CD4-positive, alpha-beta memory T cell (primary cell): ENCODE measurements at regions of chr19 and their contacts with region 1.

Region 1: GRCh38 chr19:44002566-44003460 is at the start of gene ZNF230:
- DNase-seq: peak; percentile 80 to 89 (median 83)
- H3K4me3 ChIP-seq: peak within 1 kb of the TSS; percentile 66 to 75
- H3K4me3 Mint-ChIP-seq: peak within 1 kb of the TSS; percentile 98 to 100 (median 99)
- H3K27ac ChIP-seq: peak within 1 kb of the TSS; percentile 58
- H3K27ac Mint-ChIP-seq: peak within 1 kb of the TSS; percentile 79 to 98 (median 97)
- H3K4me1 ChIP-seq: peaks cover 16% of the 10 kb centered on the region
- H3K4me1 Mint-ChIP-seq: peaks cover 22 to 30% (median 23%) of the 10 kb centered on the region in 4 donors
- H3K27me3 ChIP-seq: no peaks in the 10 kb centered on the region
- H3K27me3 Mint-ChIP-seq: no peaks in the 10 kb centered on the region
- total RNA-seq, gene ZNF230: 16.6 to 18.4 TPM

Region 2: DNA sequence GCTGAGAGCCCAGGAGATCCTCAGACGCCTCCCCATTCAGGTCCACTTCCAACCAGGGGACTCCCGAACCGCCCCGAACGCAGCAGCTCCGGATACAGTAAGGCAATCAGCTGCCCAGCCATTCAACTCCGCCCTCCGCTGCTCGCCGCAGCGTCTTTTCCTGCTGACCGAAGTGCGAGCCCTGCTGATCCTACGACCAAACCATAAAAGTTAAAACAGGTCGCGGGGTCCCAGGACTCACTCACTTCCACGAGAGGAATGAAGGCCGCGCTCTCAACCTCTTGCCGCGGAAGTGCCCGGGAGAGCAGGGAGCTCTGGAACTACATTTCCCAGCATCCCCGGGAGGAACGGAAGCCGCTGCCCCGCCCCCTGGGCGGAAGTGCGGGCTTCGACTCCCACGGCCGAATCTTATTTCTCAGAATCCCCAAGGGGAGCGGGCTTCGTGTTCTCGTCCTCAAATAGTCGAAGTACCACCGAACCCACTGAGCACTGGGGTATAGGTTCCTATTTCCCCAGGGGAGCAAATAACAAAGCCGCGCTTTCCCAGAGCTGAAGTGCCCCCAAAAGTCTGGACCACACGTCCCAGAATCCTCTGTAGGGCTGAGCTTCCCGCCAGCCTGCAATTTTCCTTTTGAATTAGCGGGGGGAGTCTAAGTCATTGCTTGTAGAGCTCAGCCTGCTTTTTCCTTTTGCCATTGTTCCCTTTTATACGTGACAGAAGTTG is 67.7 kb before region 1 on chr19 and contains the start of gene ZNF45:
- CTCF ChIA-PET with region 1: no interaction called
- POLR2A ChIA-PET with region 1: interaction called, 5 read pairs
- intact Hi-C with region 1: loop called (anchors 1 kb)
- DNase-seq: peak; percentile 86 to 90 (median 86)
- H3K4me3 ChIP-seq: peak within 1 kb of the TSS; percentile 91 to 96
- H3K4me3 Mint-ChIP-seq: peak within 1 kb of the TSS; percentile 94 to 97 (median 95)
- H3K27ac ChIP-seq: peak within 1 kb of the TSS; percentile 71
- H3K27ac Mint-ChIP-seq: peak within 1 kb of the TSS; percentile 86 to 97 (median 96)
- H3K4me1 ChIP-seq: peaks cover 21% of the 10 kb centered on the region
- H3K4me1 Mint-ChIP-seq: peaks cover 9 to 47% (median 21%) of the 10 kb centered on the region in 4 donors
- H3K27me3 ChIP-seq: no peaks in the 10 kb centered on the region
- H3K27me3 Mint-ChIP-seq: peaks cover 0 to 2% of the 10 kb centered on the region in 2 donors
- total RNA-seq, gene ZNF45: 25.1 to 29.6 TPM

Region 3: DNA sequence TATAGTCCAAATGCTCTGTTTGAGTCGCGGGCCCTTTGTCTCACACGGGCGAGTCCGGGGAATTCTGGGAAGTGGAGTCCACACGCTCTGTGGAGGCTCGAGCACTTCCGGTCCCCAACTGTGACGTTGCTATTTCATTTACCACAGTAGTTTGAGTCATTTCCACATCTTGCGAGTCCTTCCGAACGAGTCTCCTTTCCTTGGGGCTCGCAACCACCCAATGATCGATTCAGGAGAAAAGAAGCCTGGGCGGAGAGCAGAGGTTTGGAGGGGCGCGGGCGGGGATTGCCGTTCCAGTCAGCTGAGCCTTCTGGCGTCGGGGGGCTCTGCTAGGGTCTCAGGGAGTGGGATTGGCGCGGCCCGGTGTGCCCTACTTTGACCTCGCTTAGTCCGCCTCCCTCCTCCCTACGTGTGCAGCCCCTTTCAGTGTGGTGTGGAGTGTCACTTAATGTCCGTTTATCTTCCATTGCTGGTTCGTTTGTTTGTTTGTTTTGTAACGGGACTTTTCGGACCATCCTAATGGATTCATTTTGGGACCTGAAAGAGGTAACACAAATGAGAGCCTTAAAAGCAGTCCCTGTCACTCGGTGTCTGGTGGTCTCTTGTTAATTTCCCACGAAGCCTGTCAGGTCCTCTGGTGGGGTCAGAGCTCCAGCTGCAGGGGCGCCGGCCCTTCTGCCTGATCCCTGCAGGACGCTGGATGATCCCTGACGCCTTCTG is 22.6 kb after region 1 on chr19 and contains the start of gene ZNF222:
- CTCF ChIA-PET with region 1: no interaction called
- POLR2A ChIA-PET with region 1: interaction called, 7 read pairs
- intact Hi-C with region 1: loop called (anchors 1 kb)
- DNase-seq: peak; percentile 66 to 84 (median 75)
- H3K4me3 ChIP-seq: peak within 1 kb of the TSS; percentile 55 to 61
- H3K4me3 Mint-ChIP-seq: peak within 1 kb of the TSS; percentile 90 to 100 (median 98)
- H3K27ac ChIP-seq: peak within 1 kb of the TSS; percentile 40
- H3K27ac Mint-ChIP-seq: peak within 1 kb of the TSS; percentile 48 to 96 (median 95)
- H3K4me1 ChIP-seq: peaks cover 15% of the 10 kb centered on the region
- H3K4me1 Mint-ChIP-seq: peaks cover 17 to 31% (median 22%) of the 10 kb centered on the region in 4 donors
- H3K27me3 ChIP-seq: no peaks in the 10 kb centered on the region
- H3K27me3 Mint-ChIP-seq: peaks cover 2 to 10% of the 10 kb centered on the region in 2 donors
- total RNA-seq, gene ZNF222: 7.9 to 11.4 TPM

Region 4: GRCh38 chr19:44093931-44094765 is 91.3 kb after region 1 on chr19 and contains the start of gene ZNF224:
- CTCF ChIA-PET with region 1: no interaction called
- POLR2A ChIA-PET with region 1: interaction called, 8 read pairs
- intact Hi-C with region 1: loop called (anchors 2 kb)
- DNase-seq: peak; percentile 73 to 84 (median 76)
- H3K4me3 ChIP-seq: peak within 1 kb of the TSS; percentile 65 to 75
- H3K4me3 Mint-ChIP-seq: peak within 1 kb of the TSS; percentile 85 to 99 (median 98)
- H3K27ac ChIP-seq: peak within 1 kb of the TSS; percentile 69
- H3K27ac Mint-ChIP-seq: peak within 1 kb of the TSS; percentile 58 to 97 (median 90)
- H3K4me1 ChIP-seq: peaks cover 9% of the 10 kb centered on the region
- H3K4me1 Mint-ChIP-seq: peaks cover 9 to 33% (median 23%) of the 10 kb centered on the region in 4 donors
- H3K27me3 ChIP-seq: no peaks in the 10 kb centered on the region
- H3K27me3 Mint-ChIP-seq: no peaks in the 10 kb centered on the region
- total RNA-seq, gene ZNF224: 86.9 to 91.2 TPM

Region 5: GRCh38 chr19:44141191-44142058 is 138.6 kb after region 1 on chr19 and contains the start of gene ZNF234:
- CTCF ChIA-PET with region 1: no interaction called
- POLR2A ChIA-PET with region 1: no interaction called
- intact Hi-C with region 1: loop called (anchors 1 kb)
- DNase-seq: peak; percentile 58 to 65 (median 64)
- H3K4me3 ChIP-seq: peak within 1 kb of the TSS; percentile 90 to 97
- H3K4me3 Mint-ChIP-seq: peak within 1 kb of the TSS; percentile 91 to 98 (median 95)
- H3K27ac ChIP-seq: peak within 1 kb of the TSS; percentile 48
- H3K27ac Mint-ChIP-seq: peak within 1 kb of the TSS; percentile 35 to 90 (median 89)
- H3K4me1 ChIP-seq: peaks cover 15% of the 10 kb centered on the region
- H3K4me1 Mint-ChIP-seq: peaks cover 7 to 32% (median 22%) of the 10 kb centered on the region in 4 donors
- H3K27me3 ChIP-seq: no peaks in the 10 kb centered on the region
- H3K27me3 Mint-ChIP-seq: no peaks in the 10 kb centered on the region
- total RNA-seq, gene ZNF234: 23.9 to 28.9 TPM

Region 6: GRCh38 chr19:44207126-44207803 is 204.5 kb after region 1 on chr19:
- CTCF ChIA-PET with region 1: no interaction called
- POLR2A ChIA-PET with region 1: interaction called, 4 read pairs
- intact Hi-C with region 1: loop called (anchors 1 kb)
- DNase-seq: peak; percentile 61 to 77 (median 75)
- H3K4me3 ChIP-seq: peak overlapping the region; percentile 72 to 73
- H3K4me3 Mint-ChIP-seq: peak overlapping the region; percentile 89 to 95 (median 95)
- H3K27ac ChIP-seq: peak overlapping the region; percentile 60
- H3K27ac Mint-ChIP-seq: peak overlapping the region; percentile 61 to 95 (median 90)
- H3K4me1 ChIP-seq: peaks cover 5% of the 10 kb centered on the region
- H3K4me1 Mint-ChIP-seq: peaks cover 5 to 14% (median 10%) of the 10 kb centered on the region in 4 donors
- H3K27me3 ChIP-seq: no peaks in the 10 kb centered on the region
- H3K27me3 Mint-ChIP-seq: peaks cover 0 to 6% of the 10 kb centered on the region in 2 donors